ENCODE measurements at regions of chr2 and their contacts with region 1.

Region 1: GRCh38 chr2:168118733-168119514 is 128.5 kb downstream of the STK39 start:
- DNase-seq: peak in 3 of 35 experiments; percentile 7 to 61 (median 19)
- ATAC-seq: no peak
- H3K4me3 ChIP-seq: no peak overlapping the region
- H3K4me3 Mint-ChIP-seq: no peak overlapping the region
- H3K27ac ChIP-seq: no peak overlapping the region
- H3K27ac Mint-ChIP-seq: no peak overlapping the region
- H3K4me1 ChIP-seq: no peaks in the 10 kb centered on the region
- H3K4me1 Mint-ChIP-seq: peaks cover 0 to 4% (median 0%) of the 10 kb centered on the region in 3 donors
- H3K27me3 ChIP-seq: no peaks in the 10 kb centered on the region
- H3K27me3 Mint-ChIP-seq: no peaks in the 10 kb centered on the region

Region 2: GRCh38 chr2:166468124-166469024 is 1650.5 kb before region 1 on chr2:
- CTCF ChIA-PET with region 1: interaction called in 1 of 2 experiments, 12 read pairs
- POLR2A ChIA-PET with region 1: no interaction called
- DNase-seq: no peak
- ATAC-seq: no peak
- H3K4me3 ChIP-seq: no peak overlapping the region
- H3K4me3 Mint-ChIP-seq: no peak overlapping the region
- H3K27ac ChIP-seq: no peak overlapping the region
- H3K27ac Mint-ChIP-seq: no peak overlapping the region
- H3K4me1 ChIP-seq: no peaks in the 10 kb centered on the region
- H3K4me1 Mint-ChIP-seq: no peaks in the 10 kb centered on the region
- H3K27me3 ChIP-seq: no peaks in the 10 kb centered on the region
- H3K27me3 Mint-ChIP-seq: no peaks in the 10 kb centered on the region

Region 3: DNA sequence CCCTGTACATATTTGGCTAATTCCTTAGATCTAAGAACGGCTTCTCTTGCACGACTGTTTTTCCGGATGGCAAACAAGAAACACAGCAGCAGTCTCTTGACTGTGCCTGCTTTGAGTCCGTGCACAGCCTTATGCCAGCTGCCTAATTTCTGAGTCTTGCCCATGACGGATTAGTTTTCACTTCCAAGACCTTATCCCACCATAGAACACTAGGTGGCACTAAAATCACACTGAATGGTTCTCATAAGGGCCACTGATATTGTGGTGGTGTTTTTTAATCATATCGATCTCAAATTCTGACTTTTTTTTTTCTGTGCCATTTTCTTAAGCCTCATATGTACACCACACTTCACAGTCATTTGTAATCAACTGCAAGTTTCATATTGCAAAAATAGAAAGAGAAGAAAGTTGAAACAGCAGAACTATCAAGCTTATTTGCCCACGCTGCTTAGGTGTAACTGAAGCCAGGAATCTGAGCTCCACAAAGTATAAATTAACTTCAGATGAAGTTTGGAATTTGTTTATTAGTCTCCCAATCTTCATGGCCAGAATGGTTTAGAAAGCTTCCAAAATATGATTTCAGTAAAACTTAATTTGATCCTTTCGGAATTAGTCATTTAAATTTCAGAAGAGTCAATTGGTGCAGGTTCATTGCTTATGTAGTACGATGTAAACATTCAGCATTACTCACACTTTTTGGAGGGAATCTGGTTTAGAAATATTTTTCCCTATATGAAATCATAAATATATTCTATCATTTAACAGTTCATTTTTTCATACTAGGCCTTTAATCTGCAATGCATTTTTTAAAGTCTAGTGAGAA is 1579.4 kb before region 1 on chr2:
- CTCF ChIA-PET with region 1: interaction called, 5 to 11 read pairs
- POLR2A ChIA-PET with region 1: no interaction called
- DNase-seq: peak in 10 of 35 experiments; percentile 0 to 61 (median 2)
- ATAC-seq: peak in 3 of 4 experiments; percentile 51 to 65 (median 60)
- H3K4me3 ChIP-seq: peak overlapping the region in 1 of 2 donors; percentile 15
- H3K4me3 Mint-ChIP-seq: no peak overlapping the region
- H3K27ac ChIP-seq: no peak overlapping the region
- H3K27ac Mint-ChIP-seq: no peak overlapping the region
- H3K4me1 ChIP-seq: no peaks in the 10 kb centered on the region
- H3K4me1 Mint-ChIP-seq: peaks cover 3 to 5% (median 3%) of the 10 kb centered on the region in 3 donors
- H3K27me3 ChIP-seq: no peaks in the 10 kb centered on the region
- H3K27me3 Mint-ChIP-seq: peaks cover 5 to 11% of the 10 kb centered on the region in 2 donors

Region 4: DNA sequence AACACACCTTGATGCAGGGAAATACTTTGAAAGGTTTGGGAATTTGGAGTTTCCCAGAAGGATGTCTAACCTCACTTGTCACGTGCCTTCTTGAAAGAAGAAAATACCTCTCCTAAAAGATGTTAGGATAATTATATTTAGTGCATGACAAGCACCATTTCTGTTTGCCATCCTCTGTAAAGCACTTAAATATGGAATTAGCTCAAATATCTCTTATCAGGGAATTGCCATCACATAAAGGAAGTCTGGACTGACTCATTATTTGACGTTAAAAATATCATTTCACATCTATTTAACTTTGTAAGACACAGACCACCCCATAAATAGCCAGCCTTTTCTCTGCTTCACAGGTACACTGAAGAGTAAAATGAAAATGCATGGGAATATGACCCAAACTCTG is 11.6 kb before region 1 on chr2:
- CTCF ChIA-PET with region 1: interaction called, 7 to 20 read pairs
- POLR2A ChIA-PET with region 1: interaction called in 1 of 2 experiments, 6 read pairs
- DNase-seq: no peak
- ATAC-seq: no peak
- H3K4me3 ChIP-seq: no peak overlapping the region
- H3K4me3 Mint-ChIP-seq: no peak overlapping the region
- H3K27ac ChIP-seq: no peak overlapping the region
- H3K27ac Mint-ChIP-seq: no peak overlapping the region
- H3K4me1 ChIP-seq: no peaks in the 10 kb centered on the region
- H3K4me1 Mint-ChIP-seq: peaks cover 0 to 3% (median 0%) of the 10 kb centered on the region in 3 donors
- H3K27me3 ChIP-seq: no peaks in the 10 kb centered on the region
- H3K27me3 Mint-ChIP-seq: no peaks in the 10 kb centered on the region

Region 5: DNA sequence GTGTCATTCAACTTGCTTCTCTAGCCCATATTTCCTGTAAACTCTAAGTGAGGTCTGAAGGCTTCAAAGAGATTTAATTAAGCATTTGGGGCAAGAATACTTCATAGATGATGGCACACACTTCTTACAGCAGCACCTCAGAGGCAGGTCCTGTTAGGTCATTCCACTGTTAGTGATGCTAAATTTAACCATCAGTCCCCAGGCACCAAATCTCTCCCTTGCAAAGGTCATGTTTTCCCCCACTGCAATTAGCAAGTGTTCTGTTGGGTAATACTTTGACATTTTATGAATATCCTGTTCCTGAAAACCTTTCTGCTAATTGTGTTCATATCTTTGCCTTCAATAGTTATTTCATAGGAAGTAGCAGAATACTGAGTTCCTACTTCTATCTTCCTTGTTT is 11.4 kb after region 1 on chr2:
- CTCF ChIA-PET with region 1: interaction called, 11 to 16 read pairs
- POLR2A ChIA-PET with region 1: no interaction called
- DNase-seq: no peak
- ATAC-seq: no peak
- H3K4me3 ChIP-seq: no peak overlapping the region
- H3K4me3 Mint-ChIP-seq: no peak overlapping the region
- H3K27ac ChIP-seq: no peak overlapping the region
- H3K27ac Mint-ChIP-seq: no peak overlapping the region
- H3K4me1 ChIP-seq: no peaks in the 10 kb centered on the region
- H3K4me1 Mint-ChIP-seq: peaks cover 0 to 13% (median 3%) of the 10 kb centered on the region in 3 donors
- H3K27me3 ChIP-seq: no peaks in the 10 kb centered on the region
- H3K27me3 Mint-ChIP-seq: no peaks in the 10 kb centered on the region

Region 6: GRCh38 chr2:168136392-168136977 is 17.6 kb after region 1 on chr2:
- CTCF ChIA-PET with region 1: interaction called, 3 to 10 read pairs
- POLR2A ChIA-PET with region 1: no interaction called
- DNase-seq: peak in 1 of 35 experiments; percentile 59
- ATAC-seq: peak in 1 of 4 experiments; percentile 47
- H3K4me3 ChIP-seq: no peak overlapping the region
- H3K4me3 Mint-ChIP-seq: no peak overlapping the region
- H3K27ac ChIP-seq: no peak overlapping the region
- H3K27ac Mint-ChIP-seq: no peak overlapping the region
- H3K4me1 ChIP-seq: no peaks in the 10 kb centered on the region
- H3K4me1 Mint-ChIP-seq: peaks cover 7 to 29% (median 9%) of the 10 kb centered on the region in 3 donors
- H3K27me3 ChIP-seq: no peaks in the 10 kb centered on the region
- H3K27me3 Mint-ChIP-seq: no peaks in the 10 kb centered on the region

Region 7: GRCh38 chr2:168363347-168364092 is 244.6 kb after region 1 on chr2:
- CTCF ChIA-PET with region 1: no interaction called
- POLR2A ChIA-PET with region 1: no interaction called
- DNase-seq: no peak
- ATAC-seq: no peak
- H3K4me3 ChIP-seq: no peak overlapping the region
- H3K4me3 Mint-ChIP-seq: no peak overlapping the region
- H3K27ac ChIP-seq: no peak overlapping the region
- H3K27ac Mint-ChIP-seq: no peak overlapping the region
- H3K4me1 ChIP-seq: no peaks in the 10 kb centered on the region
- H3K4me1 Mint-ChIP-seq: peaks cover 4 to 9% (median 7%) of the 10 kb centered on the region in 3 donors
- H3K27me3 ChIP-seq: no peaks in the 10 kb centered on the region
- H3K27me3 Mint-ChIP-seq: no peaks in the 10 kb centered on the region

Region 8: GRCh38 chr2:168705534-168706470 is 586.9 kb after region 1 on chr2:
- CTCF ChIA-PET with region 1: no interaction called
- POLR2A ChIA-PET with region 1: no interaction called
- DNase-seq: peak in 1 of 35 experiments; percentile 29
- ATAC-seq: no peak
- H3K4me3 ChIP-seq: no peak overlapping the region
- H3K4me3 Mint-ChIP-seq: no peak overlapping the region
- H3K27ac ChIP-seq: no peak overlapping the region
- H3K27ac Mint-ChIP-seq: no peak overlapping the region
- H3K4me1 ChIP-seq: no peaks in the 10 kb centered on the region
- H3K4me1 Mint-ChIP-seq: peaks cover 0 to 20% (median 6%) of the 10 kb centered on the region in 3 donors
- H3K27me3 ChIP-seq: no peaks in the 10 kb centered on the region
- H3K27me3 Mint-ChIP-seq: no peaks in the 10 kb centered on the region